Naive thymus-derived CD4-positive, alpha-beta T cell (primary cell): ENCODE measurements at regions of chr4 and their contacts with region 1.

Region 1: GRCh38 chr4:87037671-87038334 is 103.0 kb downstream of the AFF1 start:
- DNase-seq: no peak
- ATAC-seq: no peak
- H3K4me3 ChIP-seq: no peak overlapping the region
- H3K4me3 Mint-ChIP-seq: peak overlapping the region in 2 of 10 donors; percentile 6 to 17
- H3K27ac ChIP-seq: no peak overlapping the region
- H3K27ac Mint-ChIP-seq: peak overlapping the region in 3 of 9 donors; percentile 14 to 70 (median 62)
- H3K4me1 ChIP-seq: peaks cover 0 to 15% of the 10 kb centered on the region in 2 donors
- H3K4me1 Mint-ChIP-seq: peaks cover 36 to 78% (median 59%) of the 10 kb centered on the region in 7 donors
- H3K27me3 ChIP-seq: no peaks in the 10 kb centered on the region
- H3K27me3 Mint-ChIP-seq: no peaks in the 10 kb centered on the region

Region 2: DNA sequence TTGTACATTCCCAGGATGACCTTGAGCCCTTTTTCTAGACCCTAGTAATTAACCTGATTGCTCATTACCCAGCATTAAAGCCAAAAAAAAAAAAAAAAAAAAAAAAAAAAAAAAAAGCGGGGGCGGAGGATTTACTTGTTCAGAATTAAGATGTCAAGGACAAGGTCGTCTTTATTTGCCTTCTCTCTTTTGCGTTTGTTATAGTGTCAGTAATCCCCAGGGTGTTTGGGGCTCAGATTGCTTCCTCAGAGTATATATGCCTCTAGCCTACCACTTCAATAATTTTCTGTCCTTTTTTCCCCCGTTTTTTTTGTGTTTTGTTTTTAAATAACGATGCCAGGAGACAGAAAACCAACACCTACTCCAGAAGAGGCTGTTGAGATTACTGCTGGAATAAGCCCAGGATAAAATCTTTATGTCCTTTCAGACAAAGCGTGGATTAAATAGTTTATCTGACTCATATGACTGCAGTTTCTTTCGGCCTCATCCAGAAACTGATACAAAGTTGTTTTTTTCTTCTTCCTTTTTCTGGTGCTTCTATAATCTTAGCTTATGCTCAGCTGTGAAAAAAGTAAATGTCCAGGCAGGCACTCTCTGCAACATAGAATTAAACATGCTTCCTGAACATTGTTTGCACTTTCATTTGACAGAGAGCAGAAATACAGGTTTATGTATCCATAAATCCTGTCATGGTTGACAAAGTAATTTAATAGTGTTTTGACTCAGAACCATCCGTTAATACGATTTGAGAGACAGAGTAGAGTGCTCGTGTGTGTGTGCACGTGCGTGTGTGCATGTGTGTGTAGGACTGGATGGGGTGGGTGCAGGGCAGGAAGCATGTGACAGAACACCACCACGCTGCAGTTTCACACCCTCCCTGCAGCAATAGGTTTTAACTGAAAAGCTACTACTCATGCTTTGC is 35.7 kb after region 1 on chr4:
- CTCF ChIA-PET with region 1: no interaction called
- POLR2A ChIA-PET with region 1: no interaction called
- intact Hi-C with region 1: loop called in 1 of 2 experiments (anchors 2 kb)
- DNase-seq: peak in 7 of 9 donors; percentile 20 to 59 (median 54)
- ATAC-seq: peak; percentile 91
- H3K4me3 ChIP-seq: peak overlapping the region; percentile 5
- H3K4me3 Mint-ChIP-seq: peak overlapping the region; percentile 75 to 87 (median 83)
- H3K27ac ChIP-seq: peak overlapping the region; percentile 6
- H3K27ac Mint-ChIP-seq: peak overlapping the region; percentile 41 to 93 (median 73)
- H3K4me1 ChIP-seq: peaks cover 6 to 9% of the 10 kb centered on the region in 2 donors
- H3K4me1 Mint-ChIP-seq: peaks cover 35 to 72% (median 66%) of the 10 kb centered on the region in 7 donors
- H3K27me3 ChIP-seq: no peaks in the 10 kb centered on the region
- H3K27me3 Mint-ChIP-seq: no peaks in the 10 kb centered on the region